Activated CD4-positive, alpha-beta T cell treated with anti-CD3 and anti-CD28 coated beads for 36 hours (primary cell): ENCODE measurements at regions of chr3 and their contacts with region 1.

Region 1: GRCh38 chr3:4866841-4867240 is 112.4 kb upstream of the BHLHE40 start:
- DNase-seq: no peak
- ATAC-seq: no peak
- H3K4me3 Mint-ChIP-seq: peak overlapping the region; percentile 80
- H3K27ac Mint-ChIP-seq: peak overlapping the region; percentile 92
- H3K4me1 Mint-ChIP-seq: peaks cover 40% of the 10 kb centered on the region
- H3K27me3 Mint-ChIP-seq: no peaks in the 10 kb centered on the region

Region 2: DNA sequence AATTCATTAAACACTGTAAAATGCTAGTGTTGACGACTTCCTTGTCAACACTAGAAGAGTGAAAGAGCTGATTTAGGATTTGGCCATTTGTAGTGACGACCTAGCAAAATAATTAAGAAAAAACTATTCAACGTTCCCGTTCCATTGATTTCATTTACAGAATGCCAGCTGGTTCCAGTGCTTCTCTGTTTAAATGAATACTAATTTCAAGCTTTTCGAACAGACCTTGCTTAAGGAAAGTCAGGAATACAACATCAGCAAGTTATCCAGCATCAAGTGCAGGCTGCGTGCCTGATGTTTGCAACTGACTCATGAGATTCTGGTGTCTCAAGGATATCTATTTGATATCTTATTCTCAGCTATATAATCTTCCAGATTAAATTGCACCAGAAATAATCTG is 14.0 kb after region 1 on chr3:
- CTCF ChIA-PET with region 1: interaction called, 15 read pairs
- POLR2A ChIA-PET with region 1: no interaction called
- intact Hi-C with region 1: no loop called
- DNase-seq: no peak
- ATAC-seq: no peak
- H3K4me3 Mint-ChIP-seq: no peak overlapping the region
- H3K27ac Mint-ChIP-seq: no peak overlapping the region
- H3K4me1 Mint-ChIP-seq: peaks cover 19% of the 10 kb centered on the region
- H3K27me3 Mint-ChIP-seq: no peaks in the 10 kb centered on the region

Region 3: GRCh38 chr3:4888913-4889846 is 22.3 kb after region 1 on chr3:
- CTCF ChIA-PET with region 1: interaction called, 3 read pairs
- POLR2A ChIA-PET with region 1: no interaction called
- intact Hi-C with region 1: loop called in 1 of 2 experiments (anchors 1 kb)
- DNase-seq: peak; percentile 50
- ATAC-seq: peak; percentile 90
- H3K4me3 Mint-ChIP-seq: peak overlapping the region; percentile 5
- H3K27ac Mint-ChIP-seq: peak overlapping the region; percentile 83
- H3K4me1 Mint-ChIP-seq: peaks cover 37% of the 10 kb centered on the region
- H3K27me3 Mint-ChIP-seq: peaks cover 2% of the 10 kb centered on the region